Activated CD8-positive, alpha-beta T cell treated with anti-CD3 and anti-CD28 coated beads, Interleukin-2, amount 10 ng/mL, durations not matched to agents 7 days and 5 days (primary cell): ENCODE measurements at regions of chr12 and their contacts with region 1.

Region 1: DNA sequence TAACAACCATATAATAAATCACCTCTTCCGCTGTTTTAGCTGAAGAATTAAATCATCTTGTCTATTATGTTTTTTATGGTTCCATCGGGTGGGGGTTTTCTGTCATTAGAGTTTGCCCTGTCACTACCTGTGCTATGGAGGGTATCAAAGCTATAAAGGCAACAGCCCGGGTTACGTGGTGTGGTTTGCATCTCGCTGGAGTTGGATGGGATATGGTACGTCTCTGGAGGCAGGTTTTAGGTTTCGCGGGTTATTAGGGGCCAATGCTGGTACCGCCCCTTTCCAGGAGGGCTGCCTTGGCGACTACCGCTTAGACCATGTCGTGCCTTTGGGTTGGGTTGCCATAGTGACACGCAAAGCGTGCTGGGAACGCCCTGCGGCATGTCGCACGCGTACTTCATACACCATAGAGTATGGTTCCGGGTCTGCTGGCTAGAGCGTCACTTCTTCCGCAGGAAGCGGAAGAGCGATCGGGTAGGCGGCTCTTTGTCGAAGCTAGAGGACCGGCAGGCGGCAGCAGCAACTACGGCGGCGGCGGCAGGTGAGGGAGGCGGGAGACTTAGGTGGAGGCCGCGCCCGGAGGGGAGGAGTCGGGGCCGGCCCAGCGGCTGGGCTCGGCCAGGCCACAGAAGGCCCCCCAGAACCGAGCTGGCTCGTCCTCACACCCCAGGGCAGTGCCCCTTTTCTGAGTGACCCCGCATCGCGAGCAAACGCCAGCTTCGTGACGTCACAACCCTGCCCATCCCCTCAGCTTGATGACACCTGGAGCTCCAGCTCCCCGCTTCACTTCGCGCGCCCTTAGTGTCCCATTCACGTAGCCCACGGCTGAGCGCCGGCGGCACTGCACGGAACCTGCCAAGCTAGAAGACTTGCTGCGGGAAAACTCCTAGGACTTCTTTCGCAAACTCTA is at the start of gene ZC3H10:
- DNase-seq: peak; percentile 100
- ATAC-seq: peak; percentile 76
- H3K4me3 Mint-ChIP-seq: peak within 1 kb of the TSS; percentile 100
- H3K27ac Mint-ChIP-seq: peak within 1 kb of the TSS; percentile 100
- H3K4me1 Mint-ChIP-seq: peaks cover 39% of the 10 kb centered on the region
- H3K27me3 Mint-ChIP-seq: no peaks in the 10 kb centered on the region
- total RNA-seq, gene ZC3H10: 9.1 to 10.6 TPM

Region 2: DNA sequence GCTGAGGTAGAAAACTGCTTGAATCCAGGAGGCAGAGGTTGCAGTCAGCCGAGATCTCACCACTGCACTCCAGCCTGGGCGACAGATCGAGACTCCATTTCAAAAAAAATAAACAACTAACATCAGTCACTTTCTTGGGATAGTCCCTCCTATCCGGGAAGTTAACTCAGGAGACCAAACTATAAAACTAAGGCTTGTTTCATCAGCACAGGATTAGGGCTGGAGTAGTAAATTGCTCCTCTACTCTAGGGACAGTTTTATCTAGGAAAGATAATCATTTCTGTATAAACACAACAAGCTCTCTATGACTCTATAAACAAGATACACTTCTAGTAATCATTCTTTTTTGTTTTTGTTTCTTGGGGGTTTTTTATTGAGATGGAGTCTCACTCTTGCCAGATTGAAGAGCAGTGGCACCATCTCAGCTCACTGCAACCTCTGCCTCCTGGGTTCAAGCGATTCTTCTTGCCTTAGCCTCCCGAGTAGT is 64.6 kb before region 1 on chr12:
- CTCF ChIA-PET with region 1: no interaction called
- POLR2A ChIA-PET with region 1: no interaction called
- DNase-seq: no peak
- ATAC-seq: no peak
- H3K4me3 Mint-ChIP-seq: no peak overlapping the region
- H3K27ac Mint-ChIP-seq: no peak overlapping the region
- H3K4me1 Mint-ChIP-seq: peaks cover 9% of the 10 kb centered on the region
- H3K27me3 Mint-ChIP-seq: peaks cover 3% of the 10 kb centered on the region

Region 3: DNA sequence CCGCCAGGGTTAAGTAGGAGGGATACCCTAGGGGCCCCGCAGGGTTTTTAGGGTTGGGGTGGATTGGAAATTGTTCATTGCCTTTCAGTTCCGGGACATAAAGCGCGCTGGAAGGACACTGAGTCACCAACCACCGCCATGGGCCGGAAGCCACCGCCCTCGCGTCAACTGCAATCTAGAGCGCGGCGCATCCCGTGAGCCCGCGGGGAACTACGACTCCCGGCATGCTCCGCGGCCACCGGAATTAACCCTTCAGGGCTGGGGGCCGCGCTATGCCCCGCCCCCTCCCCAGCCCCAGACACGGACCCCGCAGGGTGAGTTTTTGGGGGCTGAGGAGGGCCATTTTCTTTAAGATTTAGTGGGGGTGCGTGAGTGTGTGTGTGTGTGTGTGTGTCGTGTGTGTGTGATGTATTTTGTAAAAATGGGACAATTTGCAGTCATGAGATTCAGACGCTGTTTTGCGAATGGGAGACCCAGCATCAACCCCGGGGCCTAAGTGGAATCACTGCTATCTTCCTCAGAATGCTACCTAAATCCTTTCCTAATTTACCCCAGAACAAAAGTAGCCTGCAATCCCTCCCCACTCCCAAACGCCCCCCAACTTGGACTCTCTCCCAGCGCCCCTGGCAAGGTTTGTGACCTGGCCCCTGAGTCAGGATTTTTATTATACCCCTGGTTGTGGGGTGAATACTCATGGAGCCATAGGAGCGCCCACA is 34.4 kb after region 1 on chr12 and contains the start of gene MYL6B:
- CTCF ChIA-PET with region 1: interaction called, 17 read pairs
- POLR2A ChIA-PET with region 1: interaction called, 17 read pairs
- DNase-seq: peak; percentile 97
- ATAC-seq: peak; percentile 91
- H3K4me3 Mint-ChIP-seq: peak within 1 kb of the TSS; percentile 92
- H3K27ac Mint-ChIP-seq: peak within 1 kb of the TSS; percentile 99
- H3K4me1 Mint-ChIP-seq: peaks cover 60% of the 10 kb centered on the region
- H3K27me3 Mint-ChIP-seq: no peaks in the 10 kb centered on the region
- total RNA-seq, gene MYL6B: 60.0 to 60.7 TPM